ENCODE measurements at regions of chrX and their contacts with region 1.

Region 1: DNA sequence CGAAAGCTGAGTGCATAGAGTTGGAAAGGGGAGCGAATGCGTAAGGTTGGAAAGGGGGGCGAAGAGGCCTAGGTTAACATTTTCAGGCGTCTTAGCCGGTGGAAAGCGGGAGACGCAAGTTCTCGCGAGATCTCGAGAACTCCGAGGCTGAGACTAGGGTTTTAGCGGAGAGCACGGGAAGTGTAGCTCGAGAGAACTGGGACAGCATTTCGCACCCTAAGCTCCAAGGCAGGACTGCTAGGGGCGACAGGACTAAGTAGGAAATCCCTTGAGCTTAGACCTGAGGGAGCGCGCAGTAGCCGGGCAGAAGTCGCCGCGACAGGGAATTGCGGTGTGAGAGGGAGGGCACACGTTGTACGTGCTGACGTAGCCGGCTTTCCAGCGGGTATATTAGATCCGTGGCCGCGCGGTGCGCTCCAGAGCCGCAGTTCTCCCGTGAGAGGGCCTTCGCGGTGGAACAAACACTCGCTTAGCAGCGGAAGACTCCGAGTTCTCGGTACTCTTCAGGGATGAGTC is at the start of gene DDX3X:
- DNase-seq: peak; percentile 89 to 96
- ATAC-seq: peak; percentile 86 to 87 (median 86)
- H3K4me3 ChIP-seq: peak within 1 kb of the TSS; percentile 99
- H3K27ac ChIP-seq: peak within 1 kb of the TSS; percentile 100
- H3K4me1 ChIP-seq: peaks cover 24% of the 10 kb centered on the region
- H3K27me3 ChIP-seq: no peaks in the 10 kb centered on the region
- CTCF ChIP-seq: peak; percentile 36
- total RNA-seq, gene DDX3X: 153 to 408 (median 295) TPM

Region 2: DNA sequence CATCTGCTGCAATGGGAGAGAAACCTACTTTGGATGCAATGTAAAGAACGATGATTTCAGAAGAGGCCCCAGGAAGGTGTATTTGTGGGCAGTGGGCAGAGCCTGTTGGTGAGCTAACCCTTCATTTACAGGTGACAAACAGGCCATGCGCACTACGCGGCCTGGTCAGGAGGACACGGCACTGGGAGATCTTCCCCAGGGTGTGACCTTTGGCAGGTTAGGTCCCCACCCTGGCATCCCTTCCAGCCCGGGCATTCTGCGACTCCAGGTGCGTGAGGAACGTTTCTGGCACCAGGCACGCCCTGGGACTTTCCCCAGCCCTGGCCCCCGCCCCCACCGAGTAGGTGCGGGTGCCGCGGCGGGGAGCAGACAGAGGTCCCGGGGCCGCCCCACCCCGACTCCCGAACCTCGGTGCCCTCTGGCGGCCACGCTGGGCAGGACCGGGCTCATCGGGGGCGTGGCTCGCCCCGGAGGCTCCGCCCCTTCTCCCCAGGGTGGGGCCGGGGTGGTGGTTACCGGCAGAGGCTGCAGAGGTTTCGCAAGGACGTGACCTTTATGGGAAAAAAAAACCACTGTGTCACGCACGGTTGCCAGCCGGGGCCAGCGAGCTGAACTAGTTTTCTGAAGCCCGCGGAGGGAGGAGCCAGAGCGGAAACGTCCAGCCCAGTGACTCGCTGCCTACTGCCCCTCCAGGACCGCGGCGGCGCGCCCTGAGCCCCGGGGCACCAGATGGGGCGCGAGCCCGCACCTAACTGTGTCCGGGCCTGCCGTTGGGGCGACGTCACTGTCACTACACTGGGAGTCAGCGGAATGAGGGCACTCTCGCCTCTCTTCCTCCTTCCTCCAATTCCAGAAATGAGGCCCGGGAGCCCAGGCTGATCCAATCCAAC is 108.4 kb after region 1 on chrX:
- intact Hi-C with region 1: loop called (anchors 5 to 10 kb)
- DNase-seq: peak; percentile 89 to 95
- ATAC-seq: peak; percentile 89 to 95 (median 92)
- H3K4me3 ChIP-seq: peak overlapping the region; percentile 54
- H3K27ac ChIP-seq: peak overlapping the region; percentile 80
- H3K4me1 ChIP-seq: no peaks in the 10 kb centered on the region
- H3K27me3 ChIP-seq: peaks cover 0 to 4% (median 0%) of the 10 kb centered on the region in 3 donors
- CTCF ChIP-seq: peak; percentile 46

Region 3: DNA sequence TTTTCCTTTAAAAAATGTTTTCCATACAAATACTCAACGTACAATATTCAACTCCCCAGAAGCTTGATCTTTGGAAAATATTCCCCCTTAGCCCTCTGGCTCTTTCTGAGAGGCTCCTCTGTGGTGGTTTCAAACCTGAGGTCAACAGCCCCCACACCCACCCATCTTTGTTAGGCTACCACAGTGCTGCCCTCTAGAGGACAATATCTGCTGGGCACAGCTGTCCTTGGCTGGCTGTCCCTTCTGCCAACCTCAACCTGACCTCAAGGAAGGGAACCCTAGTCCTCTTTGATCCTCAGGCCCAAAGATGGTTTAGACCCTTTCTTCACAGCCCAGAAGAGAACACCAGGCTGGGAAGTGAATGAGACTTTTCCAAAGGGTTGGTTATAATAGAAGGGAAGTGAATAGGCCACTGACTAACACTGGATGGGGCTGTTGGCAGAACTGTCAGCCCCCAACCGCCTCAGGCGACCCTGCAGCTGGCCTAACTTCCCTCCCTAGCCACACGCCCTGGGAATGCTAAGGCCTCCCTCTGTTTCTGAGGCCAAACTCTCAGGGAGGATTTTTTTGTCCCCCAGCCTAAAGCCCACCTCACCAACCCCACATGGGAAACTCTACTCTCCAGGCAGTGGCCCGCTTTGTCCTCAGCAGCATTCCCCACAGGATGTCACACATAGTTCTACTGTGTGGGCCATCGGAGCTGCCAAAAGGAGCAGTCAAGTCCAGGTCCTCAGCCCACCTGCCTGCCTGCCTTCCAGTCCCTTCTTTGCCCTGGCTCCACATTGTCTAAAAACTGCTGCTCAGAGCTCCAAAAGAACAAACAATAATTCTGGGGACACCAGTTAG is 147.7 kb after region 1 on chrX:
- intact Hi-C with region 1: no loop called
- DNase-seq: no peak
- ATAC-seq: peak in 3 of 4 donors; percentile 62 to 79 (median 78)
- H3K4me3 ChIP-seq: no peak overlapping the region
- H3K27ac ChIP-seq: no peak overlapping the region
- H3K4me1 ChIP-seq: no peaks in the 10 kb centered on the region
- H3K27me3 ChIP-seq: no peaks in the 10 kb centered on the region
- CTCF ChIP-seq: peak; percentile 17

Measured in psoas muscle (tissue), 8 donors.